IMR-90 (cell line): ENCODE measurements at regions of chr6 and their contacts with region 1.

Region 1: GRCh38 chr6:100001915-100002388 is 7.9 kb upstream of the MCHR2 start:
- DNase-seq: peak; percentile 60
- ATAC-seq: peak; percentile 98
- H3K4me3 ChIP-seq: no peak overlapping the region
- H3K27ac ChIP-seq: no peak overlapping the region
- H3K4me1 ChIP-seq: no peaks in the 10 kb centered on the region
- H3K27me3 ChIP-seq: peaks cover 27% of the 10 kb centered on the region
- CTCF ChIP-seq: peak; percentile 90
- POLR2A ChIP-seq: no peak
- RAD21 ChIP-seq: peak; percentile 77

Region 2: DNA sequence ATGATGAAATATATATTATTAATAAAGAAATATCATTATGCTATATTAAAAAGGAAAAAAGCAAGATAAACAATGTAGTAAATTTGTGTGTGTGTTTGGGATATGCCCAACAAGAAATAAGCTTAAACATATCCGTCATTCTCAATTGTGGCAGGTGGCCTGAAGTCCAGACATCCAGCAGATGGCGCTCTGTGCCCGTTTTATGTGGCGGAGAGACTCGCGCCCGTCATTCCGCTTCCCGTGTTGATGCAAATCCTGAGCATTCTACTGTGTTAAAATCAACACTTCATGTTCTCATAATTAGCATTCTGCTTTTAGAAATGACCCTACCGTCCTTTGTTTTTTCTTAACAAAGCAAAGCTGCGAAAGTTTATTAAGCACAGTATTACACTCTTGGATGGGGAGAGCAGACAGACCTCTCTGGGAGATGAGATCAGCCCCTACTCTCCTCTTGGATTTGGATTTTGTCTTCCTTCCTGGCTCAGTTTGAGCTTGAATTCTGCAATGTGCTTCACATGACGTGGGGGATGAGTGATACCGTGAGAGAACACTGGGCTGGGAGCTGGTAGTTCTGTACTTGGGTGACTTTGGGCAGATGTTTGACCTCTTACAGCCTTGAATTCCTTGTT is 133.8 kb before region 1 on chr6:
- CTCF ChIA-PET with region 1: interaction called, 6 read pairs
- POLR2A ChIA-PET with region 1: no interaction called
- dilution Hi-C with region 1: no loop called
- in situ Hi-C with region 1: no loop called
- intact Hi-C with region 1: loop called (anchors 1 kb)
- DNase-seq: peak; percentile 51
- ATAC-seq: peak; percentile 93
- H3K4me3 ChIP-seq: no peak overlapping the region
- H3K27ac ChIP-seq: no peak overlapping the region
- H3K4me1 ChIP-seq: no peaks in the 10 kb centered on the region
- H3K27me3 ChIP-seq: peaks cover 31% of the 10 kb centered on the region
- CTCF ChIP-seq: peak; percentile 84
- POLR2A ChIP-seq: no peak
- RAD21 ChIP-seq: peak; percentile 87

Region 3: DNA sequence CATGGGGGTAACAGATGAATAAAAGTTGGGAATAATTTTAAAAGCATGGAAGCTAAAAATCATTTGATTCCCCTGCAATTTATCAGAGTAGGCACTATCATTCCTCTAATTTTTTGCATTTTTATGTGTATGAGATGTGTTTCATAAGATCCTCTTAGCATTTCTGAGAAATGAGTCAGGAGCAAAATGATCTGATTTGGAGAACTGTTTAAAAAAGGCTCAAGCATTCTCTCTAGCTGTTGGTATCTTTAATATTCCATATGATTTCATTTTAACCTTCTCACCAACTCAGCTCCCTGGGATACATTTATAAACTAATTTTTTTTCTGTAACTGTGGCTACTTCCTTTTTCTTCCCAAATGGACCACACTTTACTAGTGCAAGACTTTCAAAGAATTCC is 68.8 kb before region 1 on chr6:
- CTCF ChIA-PET with region 1: no interaction called
- POLR2A ChIA-PET with region 1: no interaction called
- dilution Hi-C with region 1: no loop called
- in situ Hi-C with region 1: no loop called
- intact Hi-C with region 1: loop called (anchors 5 kb)
- DNase-seq: peak; percentile 83
- ATAC-seq: peak; percentile 90
- H3K4me3 ChIP-seq: no peak overlapping the region
- H3K27ac ChIP-seq: peak overlapping the region; percentile 98; the same call in 1 of the 2 replicates
- H3K4me1 ChIP-seq: peaks cover 2% of the 10 kb centered on the region
- H3K27me3 ChIP-seq: no peaks in the 10 kb centered on the region
- CTCF ChIP-seq: no peak
- POLR2A ChIP-seq: no peak
- RAD21 ChIP-seq: no peak

Region 4: GRCh38 chr6:100035873-100036653 is 34.1 kb after region 1 on chr6:
- CTCF ChIA-PET with region 1: no interaction called
- POLR2A ChIA-PET with region 1: no interaction called
- dilution Hi-C with region 1: no loop called
- in situ Hi-C with region 1: no loop called
- intact Hi-C with region 1: no loop called
- DNase-seq: no peak
- ATAC-seq: no peak
- H3K4me3 ChIP-seq: no peak overlapping the region
- H3K27ac ChIP-seq: no peak overlapping the region
- H3K4me1 ChIP-seq: no peaks in the 10 kb centered on the region
- H3K27me3 ChIP-seq: no peaks in the 10 kb centered on the region
- CTCF ChIP-seq: no peak
- POLR2A ChIP-seq: no peak
- RAD21 ChIP-seq: no peak

Region 5: GRCh38 chr6:100093405-100093804 is 91.5 kb after region 1 on chr6:
- CTCF ChIA-PET with region 1: interaction called, 4 read pairs
- POLR2A ChIA-PET with region 1: no interaction called
- dilution Hi-C with region 1: no loop called
- in situ Hi-C with region 1: loop called (anchors 5 kb)
- intact Hi-C with region 1: no loop called
- DNase-seq: no peak
- ATAC-seq: no peak
- H3K4me3 ChIP-seq: no peak overlapping the region
- H3K27ac ChIP-seq: no peak overlapping the region
- H3K4me1 ChIP-seq: no peaks in the 10 kb centered on the region
- H3K27me3 ChIP-seq: peaks cover 5% of the 10 kb centered on the region
- CTCF ChIP-seq: no peak
- POLR2A ChIP-seq: no peak
- RAD21 ChIP-seq: no peak

Region 6: GRCh38 chr6:100099189-100100074 is 97.5 kb after region 1 on chr6:
- CTCF ChIA-PET with region 1: interaction called, 9 read pairs
- POLR2A ChIA-PET with region 1: no interaction called
- dilution Hi-C with region 1: no loop called
- in situ Hi-C with region 1: loop called (anchors 5 kb)
- intact Hi-C with region 1: loop called (anchors 1 kb)
- DNase-seq: peak; percentile 41
- ATAC-seq: 0 out of 2 replicates have a peak, but pooled peaks have one; percentile 43
- H3K4me3 ChIP-seq: no peak overlapping the region
- H3K27ac ChIP-seq: no peak overlapping the region
- H3K4me1 ChIP-seq: peaks cover 9% of the 10 kb centered on the region
- H3K27me3 ChIP-seq: peaks cover 3% of the 10 kb centered on the region
- CTCF ChIP-seq: peak; percentile 70
- POLR2A ChIP-seq: no peak
- RAD21 ChIP-seq: peak; percentile 53

Region 7: DNA sequence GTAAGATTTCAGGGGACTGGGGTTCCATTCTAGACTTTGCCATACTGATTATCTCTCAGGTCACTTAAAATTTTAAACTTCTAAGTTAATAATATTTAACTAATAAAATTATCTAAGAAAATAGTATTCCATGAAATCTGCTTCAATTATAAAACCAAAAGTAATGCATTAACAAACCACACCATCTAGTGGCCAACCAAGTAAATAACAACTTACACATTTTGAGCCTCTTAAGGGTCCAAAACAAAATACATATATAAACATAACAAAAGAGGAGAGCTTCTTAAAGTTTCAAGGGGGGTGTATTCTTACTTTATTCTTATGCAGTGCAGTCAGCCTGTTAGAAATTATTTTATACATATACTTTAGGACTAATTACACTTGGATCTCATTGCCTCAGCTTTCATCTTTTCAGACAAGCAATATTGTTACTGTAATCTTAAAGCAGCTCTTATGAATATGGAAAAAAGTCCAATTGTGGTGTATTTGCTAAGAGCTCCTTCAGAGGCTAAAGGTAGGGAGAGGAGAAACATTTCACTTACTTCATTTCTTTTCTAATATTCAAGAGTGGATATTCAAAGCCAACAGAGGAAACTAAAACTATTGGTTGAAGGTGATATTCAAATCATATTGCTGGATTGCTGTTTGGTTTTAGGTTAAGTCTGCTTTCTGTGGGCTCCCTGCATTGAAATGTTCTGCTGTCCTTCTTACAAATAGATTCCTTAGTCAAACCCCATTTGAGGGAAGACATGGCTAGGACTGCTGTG is 662.5 kb after region 1 on chr6:
- CTCF ChIA-PET with region 1: no interaction called
- POLR2A ChIA-PET with region 1: no interaction called
- dilution Hi-C with region 1: no loop called
- in situ Hi-C with region 1: no loop called
- intact Hi-C with region 1: loop called (anchors 5 kb)
- DNase-seq: peak; percentile 57
- ATAC-seq: peak; percentile 30
- H3K4me3 ChIP-seq: no peak overlapping the region
- H3K27ac ChIP-seq: no peak overlapping the region
- H3K4me1 ChIP-seq: no peaks in the 10 kb centered on the region
- H3K27me3 ChIP-seq: no peaks in the 10 kb centered on the region
- CTCF ChIP-seq: peak; percentile 64
- POLR2A ChIP-seq: no peak
- RAD21 ChIP-seq: peak; percentile 63